ENCODE measurements at regions of chr1 and their contacts with region 1.

Region 1: GRCh38 chr1:209576798-209577197 is 6.7 kb upstream of the CAMK1G start:
- DNase-seq: peak; percentile 78
- ATAC-seq: peak; percentile 94 to 97
- H3K4me3 ChIP-seq: no peak overlapping the region
- H3K27ac ChIP-seq: no peak overlapping the region
- H3K4me1 ChIP-seq: no peaks in the 10 kb centered on the region
- H3K27me3 ChIP-seq: peaks cover 22% of the 10 kb centered on the region
- CTCF ChIP-seq: peak; percentile 91

Region 2: DNA sequence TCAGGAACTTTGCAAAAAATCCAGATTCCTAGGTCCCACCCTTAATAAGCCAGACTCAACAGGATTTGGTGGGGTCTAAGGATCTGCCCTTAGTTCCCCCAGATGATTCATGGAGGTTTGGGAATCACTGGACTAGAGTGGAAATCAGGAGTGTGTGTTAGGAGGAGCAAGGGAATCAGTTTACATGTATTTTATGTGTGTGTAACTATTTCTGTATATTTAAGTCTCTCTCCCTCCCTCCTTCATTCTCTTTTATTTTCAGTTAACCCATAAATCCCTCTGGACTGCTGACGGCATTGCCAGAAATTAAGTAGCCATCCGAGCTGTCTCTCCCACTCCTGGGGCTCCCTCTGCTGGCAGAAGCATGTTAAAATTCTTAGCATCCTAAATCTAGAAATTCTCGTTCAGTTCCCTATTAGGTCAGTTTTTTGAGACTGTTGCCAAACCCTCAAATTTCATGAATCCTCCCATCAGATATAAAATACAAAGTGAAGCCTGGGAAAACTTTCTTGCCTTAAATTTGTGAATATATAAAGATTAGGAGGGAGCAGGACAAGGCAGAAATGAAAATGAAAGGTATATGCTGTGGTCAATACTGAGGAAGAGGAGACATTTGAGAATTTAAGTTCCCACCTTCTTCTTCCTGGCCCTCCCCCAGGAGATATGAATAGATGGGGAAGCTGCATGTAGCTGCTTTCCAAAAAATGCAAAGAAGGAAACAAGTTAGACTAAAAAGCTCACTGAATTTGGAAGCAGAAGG is 116.1 kb after region 1 on chr1:
- intact Hi-C with region 1: loop called (anchors 5 kb)
- DNase-seq: peak; percentile 63
- ATAC-seq: peak; percentile 68 to 74
- H3K4me3 ChIP-seq: no peak overlapping the region
- H3K27ac ChIP-seq: no peak overlapping the region
- H3K4me1 ChIP-seq: peaks cover 16% of the 10 kb centered on the region
- H3K27me3 ChIP-seq: peaks cover 6% of the 10 kb centered on the region
- CTCF ChIP-seq: peak; percentile 82

Measured in lower lobe of right lung (tissue), 2 donors.